Left cardiac atrium (tissue), 4 donors: ENCODE measurements at regions of chr3 and their contacts with region 1.

Region 1: GRCh38 chr3:137032465-137033120 is 74.8 kb downstream of the IL20RB start:
- DNase-seq: peak; percentile 87
- ATAC-seq: peak; percentile 90 to 93

Region 2: GRCh38 chr3:136838641-136839555 is 193.7 kb before region 1 on chr3:
- intact Hi-C with region 1: no loop called
- DNase-seq: no peak
- ATAC-seq: peak; percentile 55 to 64

Region 3: DNA sequence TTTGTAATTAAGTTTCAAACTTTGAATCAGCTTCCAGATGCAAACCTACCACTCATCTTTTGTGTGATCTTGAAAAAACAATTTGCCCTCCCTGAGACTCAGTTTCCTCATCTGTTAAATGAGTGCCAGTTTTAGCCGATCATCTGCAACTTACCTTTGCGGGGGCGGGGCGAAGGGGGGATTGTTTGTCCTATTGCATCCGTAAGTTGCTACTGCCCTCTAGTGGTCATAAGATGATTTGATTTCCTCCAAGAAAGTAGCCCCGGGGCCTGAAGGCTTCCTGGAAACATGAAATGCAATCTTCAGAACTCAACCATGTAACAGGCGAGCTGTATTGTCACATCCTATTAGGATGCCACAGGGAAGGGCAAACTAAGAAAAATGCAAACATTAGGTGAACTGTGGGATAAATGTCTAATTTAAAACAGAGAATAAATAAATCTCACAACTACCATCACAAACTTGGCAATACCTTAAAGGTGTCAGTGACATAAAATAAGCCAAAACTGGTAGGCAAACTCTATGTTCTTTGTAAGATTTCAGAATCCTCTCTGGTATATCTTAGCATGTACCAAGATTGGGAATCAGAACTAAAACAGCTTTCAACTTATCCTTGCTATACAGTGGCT is 913.9 kb after region 1 on chr3:
- intact Hi-C with region 1: loop called in 1 of 2 experiments (anchors 10 kb)
- DNase-seq: peak; percentile 38
- ATAC-seq: peak in 1 of 2 donors; percentile 30